ENCODE measurements at regions of chr7 and their contacts with region 1.

Region 1: GRCh38 chr7:100586266-100587025 is at the start of gene FBXO24:
- DNase-seq: peak; percentile 96 to 100 (median 100)
- ATAC-seq: peak; percentile 83 to 85
- H3K4me3 Mint-ChIP-seq: peak within 1 kb of the TSS; percentile 93 to 100 (median 97)
- H3K27ac Mint-ChIP-seq: peak within 1 kb of the TSS in 7 of 10 donors; percentile 81 to 98 (median 97)
- H3K4me1 Mint-ChIP-seq: peaks cover 21 to 41% (median 31%) of the 10 kb centered on the region in 4 donors
- H3K27me3 Mint-ChIP-seq: peaks cover 0 to 10% (median 3%) of the 10 kb centered on the region in 5 donors
- polyA plus RNA-seq, gene FBXO24: 0.60 to 0.95 (median 0.61) TPM

Region 2: DNA sequence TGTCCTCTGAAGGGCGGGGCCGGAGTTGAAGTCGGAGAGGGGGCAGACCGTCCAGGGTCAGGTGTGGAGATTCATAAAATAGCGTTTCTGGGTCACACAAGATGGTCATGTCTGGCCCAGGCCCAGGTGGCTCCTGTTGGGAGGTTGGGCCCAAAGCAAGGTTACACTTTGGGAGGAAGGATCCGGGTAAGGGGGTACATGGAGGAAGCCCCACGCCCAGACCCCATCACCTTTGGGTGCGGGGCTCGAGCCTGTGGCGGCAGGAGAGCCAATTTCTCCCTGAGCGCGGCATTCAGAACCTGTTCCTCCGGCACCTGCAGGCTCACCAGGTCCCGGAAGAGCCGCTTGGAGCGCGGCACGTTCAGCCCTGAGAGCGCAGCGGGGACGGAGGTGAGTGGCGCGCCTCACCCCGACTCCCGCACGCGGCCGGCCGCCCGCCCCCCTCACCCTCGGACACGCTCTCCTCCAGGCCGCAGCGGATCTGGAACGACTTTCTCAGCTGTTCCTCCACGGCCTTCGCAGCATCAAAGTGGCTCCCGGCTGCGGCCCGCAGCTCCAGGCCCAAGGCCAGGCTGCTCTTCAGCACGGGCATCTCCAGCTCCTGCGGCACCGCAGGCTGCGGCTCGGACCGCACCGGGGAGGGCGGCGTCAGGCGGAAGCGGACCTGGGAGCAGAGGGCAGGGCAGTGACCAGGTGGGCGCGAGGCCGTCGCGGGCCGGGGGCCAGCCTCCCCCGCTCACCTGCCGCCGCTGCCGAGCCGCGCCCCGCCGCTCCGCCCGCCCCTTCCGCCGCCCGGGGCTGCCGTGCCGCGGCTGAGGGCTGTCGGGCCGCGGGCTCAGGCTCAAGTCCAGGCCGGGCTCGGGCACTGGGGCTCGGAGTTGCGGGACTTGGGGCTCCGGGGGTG is 150.8 kb before region 1 on chr7:
- POLR2A ChIA-PET with region 1: interaction called, 72 read pairs
- DNase-seq: peak in 9 of 10 donors; percentile 25 to 69 (median 49)
- ATAC-seq: peak; percentile 34 to 50
- H3K4me3 Mint-ChIP-seq: peak overlapping the region; percentile 85 to 97 (median 94)
- H3K27ac Mint-ChIP-seq: peak overlapping the region; percentile 84 to 98 (median 96)
- H3K4me1 Mint-ChIP-seq: peaks cover 18 to 50% (median 48%) of the 10 kb centered on the region in 4 donors
- H3K27me3 Mint-ChIP-seq: no peaks in the 10 kb centered on the region

Region 3: DNA sequence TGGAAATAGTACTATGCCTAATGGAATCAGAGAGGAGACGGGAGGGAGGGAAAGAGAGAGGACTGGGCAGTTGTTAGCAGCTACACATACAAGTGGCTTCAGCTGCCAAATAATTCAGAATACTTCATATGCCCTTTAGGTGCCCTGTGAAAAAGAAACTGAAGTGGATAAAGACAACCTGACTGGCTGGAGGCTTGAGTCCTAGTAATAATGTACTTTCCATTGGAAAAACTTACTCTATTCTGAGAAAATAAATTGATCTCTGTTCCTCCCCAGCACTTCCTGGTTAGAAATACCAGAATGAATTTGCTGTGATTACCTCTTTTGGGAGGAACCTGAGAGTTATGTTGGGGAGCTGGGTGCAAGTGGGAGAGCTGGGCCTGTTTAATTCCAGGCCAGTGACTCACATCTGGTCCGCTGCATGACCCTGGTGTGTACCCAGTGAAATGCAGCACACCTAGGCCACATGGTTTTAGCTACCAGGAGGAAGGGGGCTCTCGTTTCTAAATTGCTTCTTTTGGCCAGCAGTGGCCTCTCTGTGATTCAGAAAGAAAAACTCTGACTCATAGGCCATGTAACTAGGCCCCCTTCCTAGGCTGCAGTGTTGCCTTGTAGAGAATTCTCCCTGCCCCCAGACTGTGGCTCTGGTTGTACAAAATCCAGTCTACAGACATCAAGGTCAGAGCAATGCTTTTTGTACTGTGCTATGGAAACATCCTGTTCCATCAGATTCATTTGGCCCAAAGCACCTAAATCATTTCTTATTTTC is 40.9 kb before region 1 on chr7:
- POLR2A ChIA-PET with region 1: interaction called, 14 read pairs
- DNase-seq: peak in 3 of 10 donors; percentile 18 to 24 (median 20)
- ATAC-seq: peak; percentile 67 to 71
- H3K4me3 Mint-ChIP-seq: peak overlapping the region; percentile 36 to 88 (median 75)
- H3K27ac Mint-ChIP-seq: peak overlapping the region; percentile 81 to 96 (median 92)
- H3K4me1 Mint-ChIP-seq: peaks cover 52 to 99% (median 93%) of the 10 kb centered on the region in 4 donors
- H3K27me3 Mint-ChIP-seq: no peaks in the 10 kb centered on the region

Region 4: GRCh38 chr7:100604028-100604975 is 17.9 kb after region 1 on chr7:
- POLR2A ChIA-PET with region 1: interaction called, 64 read pairs
- DNase-seq: peak; percentile 53 to 86 (median 66)
- ATAC-seq: peak; percentile 68 to 70
- H3K4me3 Mint-ChIP-seq: peak overlapping the region; percentile 79 to 95 (median 89)
- H3K27ac Mint-ChIP-seq: peak overlapping the region in 9 of 10 donors; percentile 69 to 96 (median 92)
- H3K4me1 Mint-ChIP-seq: peaks cover 11 to 31% (median 18%) of the 10 kb centered on the region in 4 donors
- H3K27me3 Mint-ChIP-seq: no peaks in the 10 kb centered on the region

Region 5: GRCh38 chr7:100673300-100673941 is 87.0 kb after region 1 on chr7 and contains the start of gene GNB2:
- POLR2A ChIA-PET with region 1: interaction called, 100 read pairs
- DNase-seq: peak; percentile 92 to 97 (median 96)
- ATAC-seq: peak; percentile 53 to 55
- H3K4me3 Mint-ChIP-seq: peak within 1 kb of the TSS; percentile 94 to 97 (median 96)
- H3K27ac Mint-ChIP-seq: peak within 1 kb of the TSS; percentile 84 to 99 (median 97)
- H3K4me1 Mint-ChIP-seq: peaks cover 8 to 22% (median 21%) of the 10 kb centered on the region in 4 donors
- H3K27me3 Mint-ChIP-seq: no peaks in the 10 kb centered on the region
- polyA plus RNA-seq, gene GNB2: 34.8 to 42.4 (median 42.1) TPM

Region 6: GRCh38 chr7:100852048-100852872 is 265.8 kb after region 1 on chr7 and contains the start of gene SLC12A9:
- POLR2A ChIA-PET with region 1: interaction called, 11 read pairs
- DNase-seq: peak; percentile 72 to 90 (median 83)
- ATAC-seq: peak; percentile 92 to 95
- H3K4me3 Mint-ChIP-seq: peak within 1 kb of the TSS; percentile 87 to 95 (median 92)
- H3K27ac Mint-ChIP-seq: peak within 1 kb of the TSS; percentile 79 to 98 (median 90)
- H3K4me1 Mint-ChIP-seq: peaks cover 12 to 39% (median 28%) of the 10 kb centered on the region in 4 donors
- H3K27me3 Mint-ChIP-seq: no peaks in the 10 kb centered on the region
- polyA plus RNA-seq, gene SLC12A9: 6.8 to 9.4 (median 8.0) TPM